Activated naive CD8-positive, alpha-beta T cell treated with anti-CD3 and anti-CD28 coated beads, Interleukin-2, amount 10 ng/mL, durations not matched to agents 7 days and 5 days (primary cell): ENCODE measurements at regions of chr19 and their contacts with region 1.

Region 1: GRCh38 chr19:37334179-37335071 is 36.5 kb upstream of the ZNF527 start:
- DNase-seq: peak; percentile 84
- ATAC-seq: peak; percentile 95
- H3K4me3 Mint-ChIP-seq: peak overlapping the region; percentile 94
- H3K27ac Mint-ChIP-seq: peak overlapping the region; percentile 88
- H3K4me1 Mint-ChIP-seq: peaks cover 20% of the 10 kb centered on the region
- H3K27me3 Mint-ChIP-seq: no peaks in the 10 kb centered on the region

Region 2: GRCh38 chr19:37313335-37313627 is 21.1 kb before region 1 on chr19:
- POLR2A ChIA-PET with region 1: interaction called, 17 read pairs
- DNase-seq: no peak
- ATAC-seq: no peak
- H3K4me3 Mint-ChIP-seq: peak overlapping the region; percentile 59
- H3K27ac Mint-ChIP-seq: peak overlapping the region; percentile 66
- H3K4me1 Mint-ChIP-seq: peaks cover 9% of the 10 kb centered on the region
- H3K27me3 Mint-ChIP-seq: no peaks in the 10 kb centered on the region